ENCODE measurements at regions of chr3 and their contacts with region 1.

Region 1: DNA sequence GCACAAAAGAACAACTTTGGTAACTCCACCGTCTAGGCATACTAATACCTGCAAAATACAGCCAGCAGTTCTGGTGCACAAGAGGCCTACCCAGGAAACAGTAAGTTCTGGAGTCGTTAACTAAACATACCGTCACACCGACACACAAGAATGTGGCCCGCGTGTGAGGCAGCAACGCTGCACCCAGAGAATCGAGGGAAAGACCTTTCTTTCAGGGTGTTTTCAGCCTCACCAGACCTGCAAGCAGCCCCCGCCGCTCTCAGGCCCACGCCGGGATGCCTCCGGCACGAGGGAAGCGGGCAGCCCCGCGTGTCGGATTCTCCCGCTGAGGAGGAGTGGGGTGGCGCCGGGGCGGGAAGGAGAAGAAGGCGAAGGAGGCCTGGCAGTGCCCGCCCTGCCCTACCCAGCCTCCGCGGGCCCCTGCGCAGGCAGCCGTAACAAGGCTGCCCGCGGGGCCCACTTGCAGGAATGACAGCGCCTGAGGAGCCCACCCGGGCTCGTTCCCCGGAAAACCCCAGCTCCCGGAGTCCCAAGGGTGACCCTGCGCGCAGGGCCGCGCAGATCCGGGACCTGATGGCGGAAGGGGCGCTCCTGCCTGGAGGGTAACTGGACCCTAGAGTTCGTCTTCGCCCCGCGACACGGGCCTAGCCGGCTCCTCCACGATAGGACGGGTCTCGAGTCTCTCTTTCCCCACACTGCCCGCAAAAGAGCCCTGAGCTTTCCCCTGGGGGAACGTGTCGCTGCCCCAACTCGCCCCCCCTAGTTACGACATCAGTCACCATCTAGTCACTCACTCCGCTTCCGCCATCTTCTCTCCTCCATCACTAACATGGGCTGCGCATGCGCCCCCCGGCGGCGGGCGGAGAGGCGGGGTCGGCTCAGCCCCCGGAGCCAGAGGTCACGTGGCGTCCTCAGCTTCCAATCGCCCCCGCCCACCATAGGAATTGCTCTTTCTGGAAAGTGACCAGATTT is at the start of gene PHC3:
- DNase-seq: peak; percentile 88
- H3K4me3 Mint-ChIP-seq: peak within 1 kb of the TSS; percentile 98
- H3K27ac Mint-ChIP-seq: peak within 1 kb of the TSS; percentile 100
- H3K4me1 Mint-ChIP-seq: peaks cover 33% of the 10 kb centered on the region
- H3K27me3 Mint-ChIP-seq: no peaks in the 10 kb centered on the region
- total RNA-seq, gene PHC3: 57.7 and 58.7 TPM in 2 replicates

Region 2: GRCh38 chr3:169772897-169773828 is 408.0 kb before region 1 on chr3 and contains the start of gene MYNN:
- intact Hi-C with region 1: loop called (anchors 1 kb)
- DNase-seq: peak; percentile 91
- H3K4me3 Mint-ChIP-seq: peak within 1 kb of the TSS; percentile 97
- H3K27ac Mint-ChIP-seq: peak within 1 kb of the TSS; percentile 99
- H3K4me1 Mint-ChIP-seq: peaks cover 56% of the 10 kb centered on the region
- H3K27me3 Mint-ChIP-seq: peaks cover 5% of the 10 kb centered on the region
- total RNA-seq, gene MYNN: 14.5 and 16.8 TPM in 2 replicates

Region 3: GRCh38 chr3:170037463-170038433 is 143.4 kb before region 1 on chr3 and contains the start of gene GPR160:
- intact Hi-C with region 1: loop called (anchors 1 kb)
- DNase-seq: peak; percentile 73
- H3K4me3 Mint-ChIP-seq: peak within 1 kb of the TSS; percentile 82
- H3K27ac Mint-ChIP-seq: peak within 1 kb of the TSS; percentile 42
- H3K4me1 Mint-ChIP-seq: peaks cover 24% of the 10 kb centered on the region
- H3K27me3 Mint-ChIP-seq: peaks cover 4% of the 10 kb centered on the region
- total RNA-seq, gene GPR160: 3.4 and 3.5 TPM in 2 replicates

Region 4: DNA sequence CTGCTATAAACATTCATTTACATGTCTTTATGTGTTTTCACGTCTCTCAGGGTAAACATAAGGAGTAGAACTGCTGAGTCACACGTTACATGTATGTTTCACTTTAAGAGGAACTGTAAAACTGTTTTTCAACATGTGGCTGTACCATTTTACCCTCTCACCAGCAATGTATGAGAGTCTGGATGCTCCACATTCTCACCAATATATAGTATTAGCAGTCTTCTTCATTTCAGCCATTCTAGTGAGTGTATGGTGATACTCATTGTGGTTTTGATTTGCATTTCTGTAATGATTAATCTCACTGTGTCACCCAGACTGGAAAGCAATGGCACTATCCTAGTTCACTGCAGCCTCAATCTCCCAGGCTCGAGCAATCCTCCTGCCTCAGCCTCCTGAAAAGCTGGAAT is 36.8 kb before region 1 on chr3:
- intact Hi-C with region 1: loop called (anchors 2 kb)
- DNase-seq: no peak
- H3K4me3 Mint-ChIP-seq: no peak overlapping the region
- H3K27ac Mint-ChIP-seq: no peak overlapping the region
- H3K4me1 Mint-ChIP-seq: peaks cover 13% of the 10 kb centered on the region
- H3K27me3 Mint-ChIP-seq: no peaks in the 10 kb centered on the region

Region 5: GRCh38 chr3:170257145-170257544 is 76.0 kb after region 1 on chr3:
- intact Hi-C with region 1: loop called (anchors 1 kb)
- DNase-seq: no peak
- H3K4me3 Mint-ChIP-seq: no peak overlapping the region
- H3K27ac Mint-ChIP-seq: peak overlapping the region; percentile 72
- H3K4me1 Mint-ChIP-seq: peaks cover 34% of the 10 kb centered on the region
- H3K27me3 Mint-ChIP-seq: no peaks in the 10 kb centered on the region

Region 6: GRCh38 chr3:170869645-170870593 is 688.7 kb after region 1 on chr3 and contains the start of gene RPL22L1:
- intact Hi-C with region 1: loop called (anchors 1 kb)
- DNase-seq: peak; percentile 90
- H3K4me3 Mint-ChIP-seq: peak within 1 kb of the TSS; percentile 98
- H3K27ac Mint-ChIP-seq: peak within 1 kb of the TSS; percentile 100
- H3K4me1 Mint-ChIP-seq: peaks cover 24% of the 10 kb centered on the region
- H3K27me3 Mint-ChIP-seq: peaks cover 4% of the 10 kb centered on the region
- total RNA-seq, gene RPL22L1: 123 and 145 TPM in 2 replicates